Activated CD4-positive, alpha-beta T cell treated with anti-CD3 and anti-CD28 coated beads for 36 hours (primary cell): ENCODE measurements at regions of chr6 and their contacts with region 1.

Region 1: GRCh38 chr6:158213925-158214674 is 46.0 kb downstream of the GTF2H5 start:
- DNase-seq: peak; percentile 75
- ATAC-seq: peak; percentile 97
- H3K4me3 Mint-ChIP-seq: no peak overlapping the region
- H3K27ac Mint-ChIP-seq: no peak overlapping the region
- H3K4me1 Mint-ChIP-seq: peaks cover 10% of the 10 kb centered on the region
- H3K27me3 Mint-ChIP-seq: no peaks in the 10 kb centered on the region

Region 2: DNA sequence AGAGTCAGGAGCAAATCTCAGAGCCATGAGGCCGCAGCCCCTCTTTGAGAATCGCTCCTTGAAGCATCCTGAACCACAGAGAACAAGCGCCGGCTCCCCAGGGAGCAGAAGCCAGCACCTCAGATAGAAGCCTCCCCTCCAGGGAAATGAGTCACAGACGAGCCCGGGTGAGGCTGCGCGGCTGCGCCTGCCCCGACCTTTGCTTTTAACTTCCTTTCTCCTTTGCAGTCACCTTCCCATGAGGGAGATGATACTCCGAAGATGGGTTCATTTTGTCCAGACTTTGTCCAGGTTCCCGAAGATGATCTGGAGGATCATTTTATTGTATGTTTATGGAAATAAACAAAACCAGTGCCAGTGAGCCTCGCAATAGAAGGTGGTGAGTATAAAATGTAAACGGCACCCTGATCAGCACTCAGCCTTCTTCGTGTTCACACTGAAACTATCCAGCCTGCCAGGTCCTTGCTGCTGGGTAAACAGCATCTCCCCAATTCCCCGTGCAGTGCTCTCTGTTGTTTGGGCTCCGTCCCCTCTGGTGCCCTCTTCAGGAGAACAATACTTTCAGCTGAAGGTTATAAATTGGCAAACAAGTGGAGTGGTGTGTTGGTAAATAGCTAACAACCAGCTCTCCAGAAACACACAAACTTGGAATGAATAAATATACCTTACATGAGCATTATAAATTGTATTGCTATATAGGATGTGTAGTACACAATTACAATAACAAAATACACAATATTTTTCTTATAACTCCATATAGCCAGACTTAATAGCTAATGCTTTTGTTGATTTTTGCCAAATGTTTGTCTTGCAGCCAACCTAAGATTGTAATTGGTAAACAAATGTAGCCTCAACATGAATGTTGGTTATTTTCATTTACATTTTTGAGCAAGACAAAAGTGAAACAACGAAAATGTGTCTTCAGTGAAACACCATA is 304.4 kb after region 1 on chr6:
- CTCF ChIA-PET with region 1: interaction called, 13 read pairs
- POLR2A ChIA-PET with region 1: no interaction called
- intact Hi-C with region 1: no loop called
- DNase-seq: peak; percentile 77
- ATAC-seq: peak; percentile 94
- H3K4me3 Mint-ChIP-seq: peak overlapping the region; percentile 76
- H3K27ac Mint-ChIP-seq: peak overlapping the region; percentile 79
- H3K4me1 Mint-ChIP-seq: peaks cover 36% of the 10 kb centered on the region
- H3K27me3 Mint-ChIP-seq: peaks cover 13% of the 10 kb centered on the region

Region 3: GRCh38 chr6:158605266-158605878 is 391.3 kb after region 1 on chr6:
- CTCF ChIA-PET with region 1: interaction called, 23 read pairs
- POLR2A ChIA-PET with region 1: no interaction called
- intact Hi-C with region 1: loop called (anchors 1 kb)
- DNase-seq: peak; percentile 77
- ATAC-seq: peak; percentile 74
- H3K4me3 Mint-ChIP-seq: no peak overlapping the region
- H3K27ac Mint-ChIP-seq: no peak overlapping the region
- H3K4me1 Mint-ChIP-seq: no peaks in the 10 kb centered on the region
- H3K27me3 Mint-ChIP-seq: no peaks in the 10 kb centered on the region

Region 4: GRCh38 chr6:158758451-158758861 is 544.4 kb after region 1 on chr6:
- CTCF ChIA-PET with region 1: no interaction called
- POLR2A ChIA-PET with region 1: no interaction called
- intact Hi-C with region 1: no loop called
- DNase-seq: no peak
- ATAC-seq: no peak
- H3K4me3 Mint-ChIP-seq: no peak overlapping the region
- H3K27ac Mint-ChIP-seq: no peak overlapping the region
- H3K4me1 Mint-ChIP-seq: no peaks in the 10 kb centered on the region
- H3K27me3 Mint-ChIP-seq: no peaks in the 10 kb centered on the region

Region 5: DNA sequence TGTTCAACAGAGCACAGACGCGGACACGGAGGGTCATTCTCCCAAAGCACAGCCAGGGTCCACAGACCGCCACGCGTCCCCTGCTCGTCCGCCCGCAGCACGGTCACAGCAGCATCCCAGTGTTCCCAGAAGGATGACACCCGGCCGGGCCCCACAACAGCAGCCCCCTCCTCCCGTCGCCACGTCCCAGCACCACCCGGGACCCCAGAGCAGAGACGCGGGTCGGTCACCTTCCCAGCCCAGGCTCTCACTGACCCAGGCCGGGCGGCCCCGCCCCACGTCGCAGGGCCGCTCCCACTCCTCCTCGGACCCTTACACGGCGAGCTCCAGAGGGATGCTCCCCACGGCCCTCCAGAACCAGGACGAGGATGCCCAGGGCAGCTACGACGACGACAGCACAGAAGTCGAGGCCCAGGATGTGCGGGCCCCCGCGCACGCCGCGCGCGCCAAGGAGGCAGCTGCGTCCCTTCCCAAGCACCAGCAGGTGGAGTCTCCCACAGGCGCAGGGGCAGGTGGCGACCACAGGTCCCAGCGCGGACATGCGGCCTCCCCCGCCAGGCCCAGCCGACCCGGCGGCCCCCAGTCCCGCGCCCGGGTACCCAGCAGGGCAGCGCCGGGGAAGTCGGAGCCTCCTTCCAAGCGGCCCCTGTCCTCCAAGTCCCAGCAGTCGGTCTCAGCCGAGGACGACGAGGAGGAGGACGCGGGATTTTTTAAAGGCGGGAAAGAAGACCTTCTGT is 1019.4 kb after region 1 on chr6:
- CTCF ChIA-PET with region 1: no interaction called
- POLR2A ChIA-PET with region 1: no interaction called
- intact Hi-C with region 1: no loop called
- DNase-seq: no peak
- ATAC-seq: no peak
- H3K4me3 Mint-ChIP-seq: no peak overlapping the region
- H3K27ac Mint-ChIP-seq: no peak overlapping the region
- H3K4me1 Mint-ChIP-seq: peaks cover 2% of the 10 kb centered on the region
- H3K27me3 Mint-ChIP-seq: peaks cover 32% of the 10 kb centered on the region